Gastrocnemius medialis (tissue), 4 donors: ENCODE measurements at regions of chr7 and their contacts with region 1.

Region 1: GRCh38 chr7:74039346-74039745 is 11.4 kb downstream of the ELN start:
- DNase-seq: peak; percentile 75 to 85
- ATAC-seq: peak; percentile 70 to 75
- H3K4me3 ChIP-seq: no peak overlapping the region
- H3K27ac ChIP-seq: peak overlapping the region; percentile 77 to 84 (median 82)
- H3K4me1 ChIP-seq: peaks cover 28% of the 10 kb centered on the region in 2 donors
- H3K27me3 ChIP-seq: no peaks in the 10 kb centered on the region
- CTCF ChIP-seq: no peak
- POLR2A ChIP-seq: peak in 1 of 2 donors; percentile 25

Region 2: DNA sequence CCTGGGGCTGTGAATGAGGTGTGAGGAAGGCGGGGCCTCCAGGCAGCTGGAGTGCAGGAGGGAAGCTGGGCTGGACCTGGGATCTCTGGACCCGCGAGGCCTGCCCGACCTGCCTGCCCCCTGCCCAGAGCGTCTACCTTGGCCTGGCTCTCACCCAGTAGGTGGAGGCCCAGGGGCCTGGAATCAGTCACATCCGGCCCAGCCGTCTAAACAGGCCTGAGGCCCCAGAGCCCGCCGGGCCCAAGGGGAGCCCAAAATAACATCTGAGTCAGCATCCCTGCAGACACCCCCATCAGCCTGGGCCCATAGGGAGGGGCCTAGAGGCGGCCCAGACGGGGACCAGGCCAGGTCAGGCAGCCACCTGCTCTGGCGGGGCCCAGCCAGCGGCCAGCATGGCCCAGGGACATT is 26.5 kb before region 1 on chr7:
- in situ Hi-C with region 1: no loop called
- intact Hi-C with region 1: loop called (anchors 2 kb)
- DNase-seq: no peak
- ATAC-seq: no peak
- H3K4me3 ChIP-seq: no peak overlapping the region
- H3K27ac ChIP-seq: peak overlapping the region in 3 of 4 donors; percentile 26 to 79 (median 67)
- H3K4me1 ChIP-seq: peaks cover 30% of the 10 kb centered on the region in 2 donors
- H3K27me3 ChIP-seq: no peaks in the 10 kb centered on the region
- CTCF ChIP-seq: no peak
- POLR2A ChIP-seq: no peak

Region 3: GRCh38 chr7:74104703-74105102 is 65.4 kb after region 1 on chr7:
- in situ Hi-C with region 1: no loop called
- intact Hi-C with region 1: loop called (anchors 2 kb)
- DNase-seq: peak; percentile 52 to 67
- ATAC-seq: peak; percentile 92 to 93
- H3K4me3 ChIP-seq: no peak overlapping the region
- H3K27ac ChIP-seq: peak overlapping the region; percentile 47 to 70 (median 62)
- H3K4me1 ChIP-seq: peaks cover 9% of the 10 kb centered on the region in 2 donors
- H3K27me3 ChIP-seq: no peaks in the 10 kb centered on the region
- CTCF ChIP-seq: no peak
- POLR2A ChIP-seq: no peak

Region 4: GRCh38 chr7:74525880-74526279 is 486.5 kb after region 1 on chr7:
- in situ Hi-C with region 1: no loop called
- intact Hi-C with region 1: no loop called
- DNase-seq: no peak
- ATAC-seq: no peak
- H3K4me3 ChIP-seq: no peak overlapping the region
- H3K27ac ChIP-seq: peak overlapping the region; percentile 1 to 22 (median 15)
- H3K4me1 ChIP-seq: no peaks in the 10 kb centered on the region
- H3K27me3 ChIP-seq: no peaks in the 10 kb centered on the region
- CTCF ChIP-seq: no peak
- POLR2A ChIP-seq: no peak